H1 (cell line): ENCODE measurements at regions of chr6 and their contacts with region 1.

Region 1: DNA sequence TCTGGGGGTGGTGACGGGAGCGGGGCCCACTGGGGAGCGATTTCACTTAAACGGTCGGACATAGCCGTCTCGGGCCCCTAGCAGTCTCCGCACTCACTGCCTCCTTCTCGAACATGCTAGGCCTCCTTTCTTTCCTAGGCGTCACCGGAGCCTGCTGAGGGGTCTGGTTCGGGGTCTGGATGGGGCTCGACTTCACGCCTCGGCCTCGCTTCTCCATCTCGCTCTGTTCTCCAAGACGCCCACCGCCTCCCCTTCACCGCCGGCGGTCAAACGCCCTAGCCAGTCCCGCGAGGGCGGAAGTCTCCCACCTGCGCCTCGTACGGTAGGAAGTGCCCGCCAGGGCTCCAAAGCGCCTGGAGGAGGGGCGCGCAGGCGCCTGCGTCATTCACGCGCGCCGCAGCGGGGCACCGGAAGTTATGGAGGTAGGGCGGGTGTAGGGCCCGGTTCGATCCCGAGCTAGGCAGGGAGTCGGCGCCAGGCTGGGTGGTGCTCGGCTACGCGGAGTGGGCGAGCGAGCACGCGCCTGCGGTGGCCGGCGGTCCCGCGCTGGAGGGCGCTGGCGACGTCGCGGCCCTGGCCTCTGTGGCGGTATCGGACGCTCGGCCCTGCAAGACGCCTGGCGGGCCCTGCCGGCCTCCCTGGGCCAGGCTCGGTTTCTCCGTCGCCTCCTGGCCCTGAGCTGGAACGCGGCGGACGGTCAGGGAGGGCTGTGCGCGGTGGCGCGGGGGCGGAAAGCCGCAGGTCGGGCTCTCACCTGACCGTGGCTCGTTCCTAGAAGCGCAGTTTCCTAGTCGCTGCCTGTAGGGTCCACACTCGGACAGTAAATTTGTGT is at the starts of genes DYNLT2 and ERMARD:
- DNase-seq: peak; percentile 77 to 97
- H3K4me3 ChIP-seq: peak within 1 kb of the TSS; percentile 58 to 94 (median 91)
- H3K27ac ChIP-seq: peak within 1 kb of the TSS; percentile 97
- H3K4me1 ChIP-seq: peaks cover 0 to 12% (median 6%) of the 10 kb centered on the region in 4 experiments; a peak in 5 of 7 replicates
- H3K27me3 ChIP-seq: no peaks in the 10 kb centered on the region
- CTCF ChIP-seq: peak; percentile 1 to 6 (median 3); a peak in 2 of 4 replicates
- EP300 ChIP-seq: peak in 1 of 2 experiments; percentile 13; a peak in 1 of 3 replicates
- POLR2A ChIP-seq: peak; percentile 94 to 96
- RAD21 ChIP-seq: no peak
- total RNA-seq, gene DYNLT2: 1.6 and 1.8 TPM in 2 replicates
- total RNA-seq, gene ERMARD: 11.2 and 12.2 TPM in 2 replicates

Region 2: GRCh38 chr6:169701954-169702839 is 49.3 kb before region 1 on chr6 and contains the starts of genes C6orf120 and WDR27:
- CTCF ChIA-PET with region 1: no interaction called
- POLR2A ChIA-PET with region 1: interaction called, 16 read pairs
- DNase-seq: peak; percentile 79 to 96
- H3K4me3 ChIP-seq: peak within 1 kb of the TSS; percentile 79 to 96 (median 94)
- H3K27ac ChIP-seq: peak within 1 kb of the TSS; percentile 88
- H3K4me1 ChIP-seq: peaks cover 0 to 16% (median 5%) of the 10 kb centered on the region in 4 experiments; a peak in 2 of 7 replicates
- H3K27me3 ChIP-seq: no peaks in the 10 kb centered on the region
- CTCF ChIP-seq: no peak
- EP300 ChIP-seq: no peak
- POLR2A ChIP-seq: peak; percentile 32 to 87
- RAD21 ChIP-seq: no peak
- total RNA-seq, gene C6orf120: 29.1 and 30.6 TPM in 2 replicates
- total RNA-seq, gene WDR27: 64.7 and 68.6 TPM in 2 replicates

Region 3: DNA sequence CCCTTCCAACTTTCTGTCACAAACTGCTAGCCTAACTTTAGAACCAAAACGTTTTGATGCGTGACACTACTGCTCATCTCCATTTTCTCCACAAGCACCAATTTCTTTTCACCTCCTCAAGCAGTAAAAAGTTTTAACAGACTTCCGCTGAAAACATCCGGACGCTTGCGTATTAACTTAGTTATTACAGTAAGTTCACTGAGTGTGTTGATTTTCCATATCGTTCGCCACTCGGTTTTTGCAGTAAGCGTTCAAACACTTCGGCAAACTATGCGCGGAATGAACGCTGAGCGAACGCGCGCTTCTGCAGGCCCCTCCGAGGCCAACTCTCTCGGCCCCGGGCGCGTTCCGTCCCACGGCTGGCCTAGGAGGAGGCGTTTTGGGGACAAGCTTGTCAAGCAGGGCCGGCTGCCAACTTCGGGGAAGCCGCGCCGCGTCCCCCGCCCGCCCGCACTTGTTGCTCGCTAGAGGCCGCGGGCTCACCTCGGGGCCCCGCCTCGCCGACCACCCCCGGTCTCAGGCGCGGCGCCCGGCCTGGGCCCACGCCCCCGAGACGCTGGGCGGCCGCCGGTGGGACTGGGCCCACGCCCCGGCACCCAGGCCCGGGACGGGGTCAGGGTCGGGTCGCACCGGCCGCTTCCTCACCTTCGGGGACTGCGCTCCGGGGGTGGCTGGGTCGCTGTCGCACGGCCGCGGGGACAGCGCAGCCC is 28.1 kb before region 1 on chr6:
- CTCF ChIA-PET with region 1: interaction called, 3 read pairs
- POLR2A ChIA-PET with region 1: interaction called, 35 read pairs
- DNase-seq: peak in 1 of 2 experiments; percentile 71
- H3K4me3 ChIP-seq: peak overlapping the region; percentile 76 to 78 (median 76)
- H3K27ac ChIP-seq: no peak overlapping the region
- H3K4me1 ChIP-seq: peaks cover 0 to 9% (median 4%) of the 10 kb centered on the region in 4 experiments; a peak in 5 of 7 replicates
- H3K27me3 ChIP-seq: peaks cover 0 to 2% (median under 1%) of the 10 kb centered on the region in 4 experiments; a peak in 1 of 7 replicates
- CTCF ChIP-seq: no peak
- EP300 ChIP-seq: no peak
- POLR2A ChIP-seq: 0 out of 3 replicates have a peak, but pooled peaks of 1 of the 2 experiments have one; percentile 12
- RAD21 ChIP-seq: no peak

Region 4: DNA sequence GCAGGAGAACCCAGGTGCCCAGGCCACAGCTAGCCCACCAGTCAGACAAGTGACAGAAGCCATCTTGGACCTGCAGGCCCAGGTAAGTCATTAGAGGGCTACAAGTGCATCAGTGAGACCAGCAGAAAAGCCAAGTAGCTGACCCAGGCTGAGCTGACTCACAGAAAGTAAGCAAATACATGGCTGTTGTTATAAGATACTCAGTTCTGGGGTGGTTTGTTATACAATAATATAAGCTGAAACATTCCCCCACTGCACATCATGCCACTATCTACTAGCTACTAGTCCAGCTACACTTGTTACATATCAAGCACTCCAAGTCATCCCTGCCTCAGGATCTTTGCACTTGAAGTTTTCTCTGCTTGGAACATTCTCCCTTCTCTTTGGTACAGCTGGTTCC is 10.1 kb before region 1 on chr6:
- CTCF ChIA-PET with region 1: interaction called, 14 read pairs
- POLR2A ChIA-PET with region 1: interaction called, 15 read pairs
- DNase-seq: no peak
- H3K4me3 ChIP-seq: no peak overlapping the region
- H3K27ac ChIP-seq: no peak overlapping the region
- H3K4me1 ChIP-seq: peaks cover 0 to 4% (median 2%) of the 10 kb centered on the region in 4 experiments; a peak in 3 of 7 replicates
- H3K27me3 ChIP-seq: no peaks in the 10 kb centered on the region
- CTCF ChIP-seq: no peak
- EP300 ChIP-seq: no peak
- POLR2A ChIP-seq: no peak
- RAD21 ChIP-seq: no peak

Region 5: DNA sequence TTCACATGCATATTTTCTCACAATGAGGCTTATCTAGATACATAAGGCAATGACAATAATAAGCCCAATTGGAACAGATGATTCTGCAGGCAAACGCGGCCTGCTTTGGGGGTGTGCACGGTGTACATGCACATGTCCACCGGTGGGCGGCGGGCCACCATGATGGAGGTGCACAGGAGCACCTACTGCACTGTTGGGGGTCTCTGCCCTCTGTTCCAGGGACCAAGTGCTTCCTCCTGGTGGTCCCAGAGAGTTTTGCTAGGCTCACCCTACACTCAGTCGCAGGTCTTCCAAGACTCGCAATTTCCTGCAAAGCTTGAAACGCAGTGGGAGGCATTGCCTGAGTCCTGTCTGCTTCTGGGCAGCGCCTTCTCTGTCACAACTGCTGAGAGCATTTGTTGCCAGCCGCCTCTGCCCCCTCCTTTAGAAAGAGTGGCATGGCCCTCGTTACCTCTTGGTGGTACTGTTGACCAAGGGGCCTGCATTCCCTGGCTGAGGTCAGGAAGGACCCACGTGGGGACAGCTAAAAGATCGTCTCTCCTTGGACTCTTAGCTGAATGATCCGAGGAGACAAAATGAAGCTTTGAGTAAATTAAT is 135.3 kb after region 1 on chr6:
- CTCF ChIA-PET with region 1: no interaction called
- POLR2A ChIA-PET with region 1: no interaction called
- DNase-seq: peak in 1 of 2 experiments; percentile 26
- H3K4me3 ChIP-seq: no peak overlapping the region
- H3K27ac ChIP-seq: no peak overlapping the region
- H3K4me1 ChIP-seq: no peaks in the 10 kb centered on the region
- H3K27me3 ChIP-seq: no peaks in the 10 kb centered on the region; a peak in 3 of 7 replicates
- CTCF ChIP-seq: peak; percentile 6 to 30 (median 20)
- EP300 ChIP-seq: no peak
- POLR2A ChIP-seq: no peak
- RAD21 ChIP-seq: peak in 1 of 2 experiments; percentile 4; a peak in 1 of 4 replicates